ENCODE measurements at regions of chr17 and their contacts with region 1.

Region 1: GRCh38 chr17:77734341-77735080 is 224.0 kb upstream of the TNRC6C start:
- DNase-seq: peak; percentile 66 to 93 (median 88)
- H3K4me3 ChIP-seq: peak overlapping the region in 46 of 59 donors; percentile 3 to 55 (median 30)
- H3K27ac ChIP-seq: peak overlapping the region; percentile 55 to 97 (median 86)
- H3K27me3 ChIP-seq: peaks cover 0 to 14% (median 0%) of the 10 kb centered on the region in 45 donors
- CTCF ChIP-seq: peak in 47 of 56 donors; percentile 8 to 69 (median 41)

Region 2: GRCh38 chr17:77571155-77571981 is 163.1 kb before region 1 on chr17:
- intact Hi-C with region 1: no loop called
- DNase-seq: peak in 8 of 10 donors; percentile 40 to 77 (median 60)
- H3K4me3 ChIP-seq: peak overlapping the region in 57 of 59 donors; percentile 3 to 61 (median 44)
- H3K27ac ChIP-seq: peak overlapping the region in 58 of 59 donors; percentile 33 to 89 (median 78)
- H3K27me3 ChIP-seq: peaks cover 0 to 4% (median 0%) of the 10 kb centered on the region in 45 donors
- CTCF ChIP-seq: no peak

Region 3: GRCh38 chr17:77649717-77650211 is 84.7 kb before region 1 on chr17:
- intact Hi-C with region 1: no loop called
- DNase-seq: no peak
- H3K4me3 ChIP-seq: no peak overlapping the region
- H3K27ac ChIP-seq: no peak overlapping the region
- H3K27me3 ChIP-seq: peaks cover 0 to 3% (median 0%) of the 10 kb centered on the region in 45 donors
- CTCF ChIP-seq: no peak

Region 4: GRCh38 chr17:77692571-77693161 is 41.8 kb before region 1 on chr17:
- intact Hi-C with region 1: no loop called
- DNase-seq: no peak
- H3K4me3 ChIP-seq: no peak overlapping the region
- H3K27ac ChIP-seq: no peak overlapping the region
- H3K27me3 ChIP-seq: peaks cover 0 to 6% (median 0%) of the 10 kb centered on the region in 45 donors
- CTCF ChIP-seq: no peak

Region 5: GRCh38 chr17:77778636-77779489 is 44.4 kb after region 1 on chr17:
- intact Hi-C with region 1: loop called in 1 of 2 experiments (anchors 2 kb)
- DNase-seq: peak; percentile 73 to 96 (median 92)
- H3K4me3 ChIP-seq: peak overlapping the region in 50 of 59 donors; percentile 5 to 57 (median 32)
- H3K27ac ChIP-seq: peak overlapping the region; percentile 19 to 91 (median 83)
- H3K27me3 ChIP-seq: no peaks in the 10 kb centered on the region
- CTCF ChIP-seq: peak in 12 of 56 donors; percentile 7 to 30 (median 19)